Dendritic cell treated with granulocyte-macrophage colony-stimulating factor and Interleukin-4, amounts not matched to agents 40 ng/mL and 50 ng/mL, for 4 days (primary cell): ENCODE measurements at regions of chr3 and their contacts with region 1.

Region 1: GRCh38 chr3:151316267-151316991 is at the start of gene GPR87:
- H3K4me3 Mint-ChIP-seq: no peak within 1 kb of the TSS
- H3K27ac Mint-ChIP-seq: no peak within 1 kb of the TSS
- H3K4me1 Mint-ChIP-seq: peaks cover 16% of the 10 kb centered on the region
- H3K27me3 Mint-ChIP-seq: no peaks in the 10 kb centered on the region

Region 2: DNA sequence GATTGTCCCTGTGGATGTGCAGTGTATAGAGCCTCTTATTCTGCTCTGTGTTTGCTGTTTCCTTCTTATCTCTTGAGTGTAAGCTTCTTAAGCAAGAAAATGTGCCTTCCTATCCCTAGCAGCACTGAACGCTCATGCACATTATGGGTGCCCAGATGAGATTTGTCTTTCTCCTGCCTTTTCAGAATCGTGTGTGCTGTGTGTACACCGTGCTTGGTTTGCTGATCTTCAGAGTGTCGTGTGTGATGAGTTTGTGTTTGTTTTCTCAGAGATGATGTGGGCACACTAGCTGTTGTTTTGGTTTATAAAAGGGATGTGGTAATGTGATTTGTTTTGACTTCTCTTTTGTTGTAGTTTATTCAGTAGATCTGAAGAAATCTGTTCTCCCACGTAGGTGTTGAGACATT is 133.2 kb before region 1 on chr3:
- intact Hi-C with region 1: no loop called
- H3K4me3 Mint-ChIP-seq: peak overlapping the region; percentile 35
- H3K27ac Mint-ChIP-seq: peak overlapping the region; percentile 79
- H3K4me1 Mint-ChIP-seq: peaks cover 56% of the 10 kb centered on the region
- H3K27me3 Mint-ChIP-seq: no peaks in the 10 kb centered on the region

Region 3: DNA sequence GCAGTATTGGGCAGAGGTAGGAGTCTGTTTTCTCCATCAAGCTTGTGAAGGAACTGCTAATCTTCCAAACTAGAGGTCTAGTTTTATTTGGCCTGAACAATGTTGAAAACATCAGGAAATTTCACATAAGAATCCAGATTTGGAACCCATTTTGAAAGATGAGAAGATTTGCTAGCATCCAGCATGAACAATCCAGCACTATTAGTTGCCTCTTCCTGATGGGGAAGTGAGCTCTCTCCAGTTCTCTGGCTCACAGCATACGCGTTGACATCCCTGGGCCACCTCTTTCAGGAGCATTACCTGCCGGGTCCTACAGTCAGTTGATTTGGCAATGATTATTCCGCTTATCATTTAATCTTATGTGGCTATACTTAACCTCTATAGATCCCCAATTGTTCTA is 10.7 kb before region 1 on chr3:
- intact Hi-C with region 1: loop called (anchors 2 kb)
- H3K4me3 Mint-ChIP-seq: no peak overlapping the region
- H3K27ac Mint-ChIP-seq: no peak overlapping the region
- H3K4me1 Mint-ChIP-seq: peaks cover 33% of the 10 kb centered on the region
- H3K27me3 Mint-ChIP-seq: peaks cover 2% of the 10 kb centered on the region

Region 4: GRCh38 chr3:151553888-151554287 is 237.5 kb after region 1 on chr3:
- intact Hi-C with region 1: loop called (anchors 10 kb)
- H3K4me3 Mint-ChIP-seq: no peak overlapping the region
- H3K27ac Mint-ChIP-seq: no peak overlapping the region
- H3K4me1 Mint-ChIP-seq: peaks cover 33% of the 10 kb centered on the region
- H3K27me3 Mint-ChIP-seq: no peaks in the 10 kb centered on the region